H1 (cell line): ENCODE measurements at regions of chr4 and their contacts with region 1.

Region 1: DNA sequence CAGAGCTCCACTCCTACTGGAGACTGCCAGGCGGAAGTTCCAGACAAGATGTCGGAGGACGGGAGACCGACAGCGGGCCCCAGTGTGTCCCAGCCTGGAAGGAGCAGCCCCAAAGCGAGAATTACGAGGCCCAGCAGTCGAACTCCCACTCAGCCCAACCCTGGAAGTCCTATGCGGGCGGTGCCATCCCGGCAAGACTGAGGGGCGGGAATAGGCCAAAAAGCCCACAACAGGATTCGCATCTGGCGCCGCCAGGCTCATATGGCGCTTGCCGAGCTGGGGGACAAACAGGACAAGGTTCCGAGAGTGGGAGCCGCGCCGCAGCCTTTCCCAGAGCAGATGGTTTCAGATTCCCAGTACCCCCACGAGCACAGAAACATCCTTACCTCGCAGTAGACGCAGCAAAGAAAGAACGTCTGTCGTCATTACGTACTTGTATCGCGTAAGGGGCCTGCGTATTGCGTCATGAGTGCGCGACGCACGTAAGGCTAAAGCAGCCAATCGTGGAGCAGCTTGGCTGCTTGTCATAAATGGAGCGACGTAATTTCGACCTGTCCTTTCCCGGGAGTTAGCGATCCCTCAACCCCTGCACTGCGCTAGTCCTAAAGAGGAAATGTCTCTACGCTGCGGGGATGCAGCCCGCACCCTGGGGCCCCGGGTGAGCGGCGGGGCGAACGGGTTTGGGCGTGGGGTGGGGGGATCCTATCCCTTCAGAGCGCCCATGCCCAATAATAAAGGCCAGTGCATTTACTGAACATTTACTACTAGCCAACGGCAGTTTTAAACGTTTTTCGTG is at the starts of genes LIAS and RPL9:
- DNase-seq: peak; percentile 96
- H3K4me3 ChIP-seq: peak within 1 kb of the TSS; percentile 76 to 95 (median 92)
- H3K27ac ChIP-seq: peak within 1 kb of the TSS; percentile 94
- H3K4me1 ChIP-seq: peaks cover 0 to 4% (median 2%) of the 10 kb centered on the region in 4 experiments; a peak in 2 of 7 replicates
- H3K27me3 ChIP-seq: no peaks in the 10 kb centered on the region
- CTCF ChIP-seq: no peak
- EP300 ChIP-seq: no peak
- POLR2A ChIP-seq: peak; percentile 97 to 99
- RAD21 ChIP-seq: no peak
- total RNA-seq, gene LIAS: 19.8 and 24.9 TPM in 2 replicates
- total RNA-seq, gene RPL9: 1,161 and 1,163 TPM in 2 replicates

Region 2: GRCh38 chr4:39305912-39306677 is 152.6 kb before region 1 on chr4:
- CTCF ChIA-PET with region 1: no interaction called
- POLR2A ChIA-PET with region 1: no interaction called
- DNase-seq: no peak
- H3K4me3 ChIP-seq: no peak overlapping the region
- H3K27ac ChIP-seq: no peak overlapping the region
- H3K4me1 ChIP-seq: no peaks in the 10 kb centered on the region
- H3K27me3 ChIP-seq: no peaks in the 10 kb centered on the region
- CTCF ChIP-seq: no peak
- EP300 ChIP-seq: no peak
- POLR2A ChIP-seq: no peak
- RAD21 ChIP-seq: no peak

Region 3: DNA sequence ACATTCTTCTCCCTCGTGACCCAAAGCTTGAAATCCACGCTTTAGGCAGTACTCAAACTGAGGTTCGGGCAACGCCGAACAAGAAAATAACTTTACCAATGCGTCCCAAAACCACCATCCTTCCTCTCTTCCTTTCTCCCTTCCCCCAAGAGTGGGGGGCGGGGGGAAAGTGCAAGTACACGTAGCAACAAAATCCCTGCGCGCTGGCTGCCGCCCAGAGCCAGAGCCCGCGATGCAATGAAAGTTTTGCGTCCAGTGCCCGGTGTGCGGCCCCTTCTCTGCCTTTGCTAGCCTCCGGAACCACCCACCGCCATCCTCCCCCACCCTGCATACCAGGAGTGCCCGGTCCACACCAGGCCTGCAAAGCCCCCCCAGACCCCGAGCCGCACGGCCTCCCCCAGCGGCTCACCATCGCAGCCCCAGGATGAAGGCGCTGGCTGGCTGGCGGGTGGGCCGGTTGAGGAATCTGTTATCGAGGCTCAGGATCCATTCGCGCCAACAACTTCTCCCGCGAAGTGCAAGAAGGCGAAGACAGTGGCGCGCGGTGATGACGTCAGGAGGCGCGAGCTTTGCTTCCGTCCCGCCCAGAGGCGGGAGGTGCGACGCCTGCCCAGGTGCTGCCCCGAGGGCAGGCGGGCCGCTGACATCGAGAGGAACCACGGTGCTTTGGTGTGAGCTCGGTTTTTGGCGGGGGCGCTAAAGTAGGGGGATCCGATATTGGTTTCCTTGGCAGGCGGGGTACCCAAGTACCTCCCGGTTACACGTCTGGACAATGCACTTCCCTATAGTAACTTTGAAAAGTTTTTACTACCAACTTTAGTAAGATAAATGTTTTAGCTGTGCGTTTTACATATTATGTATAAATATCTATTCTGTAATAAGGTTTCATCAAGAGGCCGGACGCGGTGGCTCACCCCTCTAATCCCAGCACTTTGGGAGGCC is 92.6 kb before region 1 on chr4 and contains the start of gene RFC1:
- CTCF ChIA-PET with region 1: no interaction called
- POLR2A ChIA-PET with region 1: interaction called, 27 read pairs
- DNase-seq: peak; percentile 91 to 97
- H3K4me3 ChIP-seq: peak within 1 kb of the TSS; percentile 80 to 93 (median 81)
- H3K27ac ChIP-seq: peak within 1 kb of the TSS; percentile 92
- H3K4me1 ChIP-seq: peaks cover 0 to 4% (median 0%) of the 10 kb centered on the region in 4 experiments; a peak in 1 of 7 replicates
- H3K27me3 ChIP-seq: peaks cover 0 to 12% (median 6%) of the 10 kb centered on the region in 4 experiments; a peak in 5 of 7 replicates
- CTCF ChIP-seq: no peak
- EP300 ChIP-seq: 0 out of 3 replicates have a peak, but pooled peaks of 1 of the 2 experiments have one; percentile 21
- POLR2A ChIP-seq: peak; percentile 71 to 91
- RAD21 ChIP-seq: no peak
- total RNA-seq, gene RFC1: 78.0 and 83.8 TPM in 2 replicates

Region 4: DNA sequence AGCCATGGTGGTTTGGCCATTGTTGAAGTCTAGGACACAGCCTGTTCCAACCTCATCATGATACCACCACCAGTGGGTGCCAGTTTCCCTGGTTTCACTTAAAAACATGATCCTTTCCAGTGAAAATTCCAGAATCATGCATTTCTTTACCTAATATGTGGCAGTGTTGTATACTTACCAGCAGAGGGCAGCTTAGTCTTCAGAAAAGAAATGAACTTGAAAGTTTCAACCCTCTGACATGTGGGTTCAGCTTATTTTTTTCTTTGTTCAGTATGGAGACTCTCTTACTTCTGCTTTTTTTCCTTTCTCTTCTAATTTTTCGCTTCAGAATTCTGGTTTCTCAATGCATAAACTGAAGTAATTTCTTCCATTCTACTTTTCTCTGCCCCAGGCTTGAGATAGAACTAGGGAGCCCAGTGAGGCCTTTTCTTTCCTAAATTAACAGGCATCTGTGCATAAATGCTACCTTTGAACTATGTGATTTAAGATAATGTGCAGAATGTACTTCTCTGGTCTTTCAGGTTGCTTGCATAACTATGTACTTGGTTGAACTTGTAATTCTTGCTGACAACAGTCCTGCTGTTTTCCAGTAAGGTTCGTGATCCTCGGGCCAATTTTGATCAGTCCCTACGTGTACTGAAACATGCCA is 10.8 kb after region 1 on chr4:
- CTCF ChIA-PET with region 1: interaction called, 18 read pairs
- POLR2A ChIA-PET with region 1: interaction called, 32 read pairs
- DNase-seq: no peak
- H3K4me3 ChIP-seq: no peak overlapping the region
- H3K27ac ChIP-seq: no peak overlapping the region
- H3K4me1 ChIP-seq: no peaks in the 10 kb centered on the region
- H3K27me3 ChIP-seq: no peaks in the 10 kb centered on the region
- CTCF ChIP-seq: peak in 2 of 3 experiments; percentile 76 to 87; a peak in 3 of 4 replicates
- EP300 ChIP-seq: 0 out of 3 replicates have a peak, but pooled peaks of 1 of the 2 experiments have one; percentile 26
- POLR2A ChIP-seq: no peak
- RAD21 ChIP-seq: peak; percentile 78 to 86

Region 5: GRCh38 chr4:39527273-39528060 is 68.8 kb after region 1 on chr4 and contains the start of gene UGDH:
- CTCF ChIA-PET with region 1: no interaction called
- POLR2A ChIA-PET with region 1: interaction called, 19 read pairs
- DNase-seq: peak; percentile 87 to 95
- H3K4me3 ChIP-seq: peak within 1 kb of the TSS; percentile 90 to 98 (median 95)
- H3K27ac ChIP-seq: peak within 1 kb of the TSS; percentile 93
- H3K4me1 ChIP-seq: peaks cover 0 to 4% (median 1%) of the 10 kb centered on the region in 4 experiments; a peak in 3 of 7 replicates
- H3K27me3 ChIP-seq: no peaks in the 10 kb centered on the region
- CTCF ChIP-seq: no peak
- EP300 ChIP-seq: no peak; a peak in 1 of 3 replicates
- POLR2A ChIP-seq: peak; percentile 63 to 89
- RAD21 ChIP-seq: no peak
- total RNA-seq, gene UGDH: 126 and 128 TPM in 2 replicates

Region 6: GRCh38 chr4:39638354-39639240 is 179.9 kb after region 1 on chr4 and contains the start of gene SMIM14:
- CTCF ChIA-PET with region 1: no interaction called
- POLR2A ChIA-PET with region 1: interaction called, 16 read pairs
- DNase-seq: peak; percentile 93 to 94
- H3K4me3 ChIP-seq: peak within 1 kb of the TSS; percentile 76 to 89 (median 85)
- H3K27ac ChIP-seq: peak within 1 kb of the TSS; percentile 98
- H3K4me1 ChIP-seq: peaks cover 2 to 19% (median 13%) of the 10 kb centered on the region in 4 experiments; a peak in 6 of 7 replicates
- H3K27me3 ChIP-seq: no peaks in the 10 kb centered on the region
- CTCF ChIP-seq: peak in 1 of 3 experiments; percentile 19; a peak in 1 of 4 replicates
- EP300 ChIP-seq: no peak
- POLR2A ChIP-seq: peak; percentile 71 to 95
- RAD21 ChIP-seq: peak in 1 of 2 experiments; percentile 15; a peak in 1 of 4 replicates
- total RNA-seq, gene SMIM14: 26.6 and 29.1 TPM in 2 replicates